ENCODE measurements at regions of chr14 and their contacts with region 1.

Region 1: DNA sequence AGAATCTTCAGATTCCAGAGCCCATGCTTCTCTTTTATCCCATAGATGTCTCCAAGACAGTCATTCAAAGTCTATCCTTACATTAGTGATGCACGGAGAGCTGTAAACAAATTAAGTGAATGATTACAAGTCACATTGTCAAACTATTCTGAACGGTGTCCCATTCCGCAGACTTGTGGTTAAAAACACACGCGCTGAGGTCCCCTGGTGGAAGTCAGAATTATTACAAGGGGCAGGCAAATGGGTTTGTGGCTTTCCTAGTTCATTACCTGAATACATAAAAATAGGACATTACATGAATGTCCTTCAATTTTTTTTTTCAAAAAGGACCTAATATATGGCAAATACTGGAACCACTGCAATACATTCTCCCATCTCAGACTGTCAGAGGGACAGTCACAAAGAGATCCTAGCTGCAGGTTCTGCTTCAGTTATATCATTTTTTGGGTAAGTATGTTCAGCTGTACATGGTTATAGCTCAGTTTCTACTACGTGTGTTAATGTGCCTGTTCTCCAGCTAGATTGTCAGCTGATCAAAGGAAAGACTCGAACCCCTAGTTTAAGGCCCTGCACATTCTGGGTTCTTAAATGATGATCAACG is 53.1 kb upstream of the STON2 start:
- DNase-seq: peak; percentile 69
- H3K4me3 Mint-ChIP-seq: no peak overlapping the region
- H3K27ac Mint-ChIP-seq: no peak overlapping the region
- H3K4me1 Mint-ChIP-seq: peaks cover 13% of the 10 kb centered on the region
- H3K27me3 Mint-ChIP-seq: peaks cover 11% of the 10 kb centered on the region

Region 2: GRCh38 chr14:81269100-81269978 is 183.9 kb before region 1 on chr14:
- CTCF ChIA-PET with region 1: interaction called, 100 read pairs
- intact Hi-C with region 1: loop called (anchors 1 kb)
- DNase-seq: peak; percentile 15
- H3K4me3 Mint-ChIP-seq: no peak overlapping the region
- H3K27ac Mint-ChIP-seq: no peak overlapping the region
- H3K4me1 Mint-ChIP-seq: no peaks in the 10 kb centered on the region
- H3K27me3 Mint-ChIP-seq: peaks cover 12% of the 10 kb centered on the region

Region 3: DNA sequence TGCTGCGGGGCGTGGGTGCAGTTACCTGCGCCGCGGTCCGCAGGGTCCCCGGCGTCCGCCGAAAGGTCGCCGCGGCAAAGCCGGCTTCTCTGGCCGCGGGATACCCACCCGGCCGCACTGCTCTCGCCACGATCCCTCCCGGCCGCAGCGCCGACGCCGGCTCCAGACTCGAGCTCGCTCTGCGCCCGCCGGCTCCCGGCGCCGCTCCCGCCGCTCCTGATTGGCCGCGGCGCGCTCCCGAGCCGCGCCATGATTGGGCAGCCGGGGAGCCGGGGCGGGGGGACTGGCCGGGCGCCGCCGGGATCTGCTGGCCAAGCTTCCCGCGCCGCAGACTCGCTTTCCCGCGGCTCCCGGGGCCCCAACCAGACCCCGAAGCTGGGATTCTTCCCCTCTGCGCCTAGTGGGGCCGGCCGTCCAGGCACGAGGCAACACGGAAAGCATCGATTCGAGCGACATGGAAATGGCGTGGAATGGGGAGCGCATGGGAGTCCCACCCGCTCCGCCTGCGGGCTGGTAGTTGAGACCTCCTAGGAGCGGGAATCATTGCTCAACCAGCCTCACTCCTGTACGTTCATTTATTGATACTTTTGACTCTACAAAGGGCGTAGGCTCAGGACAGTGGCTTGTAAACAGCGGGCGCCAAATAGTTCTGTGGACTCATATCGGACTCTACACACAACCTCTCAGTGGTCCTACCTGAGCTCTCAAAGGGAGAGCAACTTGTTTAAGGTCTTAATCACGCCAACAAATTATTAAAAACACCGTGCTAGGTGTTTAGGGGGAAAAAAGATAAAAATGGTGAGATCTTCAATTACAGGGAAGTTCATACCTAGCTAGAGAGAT is 16.7 kb before region 1 on chr14:
- CTCF ChIA-PET with region 1: interaction called, 9 read pairs
- intact Hi-C with region 1: loop called (anchors 1 kb)
- DNase-seq: peak; percentile 40
- H3K4me3 Mint-ChIP-seq: peak overlapping the region; percentile 65
- H3K27ac Mint-ChIP-seq: no peak overlapping the region
- H3K4me1 Mint-ChIP-seq: peaks cover 10% of the 10 kb centered on the region
- H3K27me3 Mint-ChIP-seq: peaks cover 65% of the 10 kb centered on the region